ENCODE measurements at regions of chr4 and their contacts with region 1.

Region 1: DNA sequence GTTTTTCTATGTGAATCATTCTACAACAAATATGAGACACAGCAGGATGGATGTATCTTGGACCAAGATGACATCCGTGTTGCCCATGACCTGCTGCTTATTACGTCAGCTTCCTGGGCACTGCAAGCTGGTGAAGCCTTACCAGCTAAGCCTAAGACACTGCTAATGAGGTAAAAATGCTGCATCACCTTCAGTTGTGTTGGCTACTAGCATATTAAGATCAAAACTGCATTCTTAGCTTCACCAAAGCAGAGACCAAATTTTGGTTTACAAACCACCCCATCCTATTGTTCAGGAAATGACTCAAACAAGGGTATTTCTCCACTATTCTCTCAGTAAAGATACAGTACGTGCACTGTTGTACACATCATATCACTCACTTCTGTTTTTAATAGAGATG is 50.3 kb downstream of the MAML3 start:
- DNase-seq: no peak
- ATAC-seq: no peak
- H3K4me3 ChIP-seq: no peak overlapping the region
- H3K27ac ChIP-seq: peak overlapping the region in 1 of 10 donors; percentile 52
- H3K4me1 ChIP-seq: peaks cover 0 to 48% (median 12%) of the 10 kb centered on the region in 9 donors
- H3K27me3 ChIP-seq: no peaks in the 10 kb centered on the region
- CTCF ChIP-seq: no peak

Region 2: DNA sequence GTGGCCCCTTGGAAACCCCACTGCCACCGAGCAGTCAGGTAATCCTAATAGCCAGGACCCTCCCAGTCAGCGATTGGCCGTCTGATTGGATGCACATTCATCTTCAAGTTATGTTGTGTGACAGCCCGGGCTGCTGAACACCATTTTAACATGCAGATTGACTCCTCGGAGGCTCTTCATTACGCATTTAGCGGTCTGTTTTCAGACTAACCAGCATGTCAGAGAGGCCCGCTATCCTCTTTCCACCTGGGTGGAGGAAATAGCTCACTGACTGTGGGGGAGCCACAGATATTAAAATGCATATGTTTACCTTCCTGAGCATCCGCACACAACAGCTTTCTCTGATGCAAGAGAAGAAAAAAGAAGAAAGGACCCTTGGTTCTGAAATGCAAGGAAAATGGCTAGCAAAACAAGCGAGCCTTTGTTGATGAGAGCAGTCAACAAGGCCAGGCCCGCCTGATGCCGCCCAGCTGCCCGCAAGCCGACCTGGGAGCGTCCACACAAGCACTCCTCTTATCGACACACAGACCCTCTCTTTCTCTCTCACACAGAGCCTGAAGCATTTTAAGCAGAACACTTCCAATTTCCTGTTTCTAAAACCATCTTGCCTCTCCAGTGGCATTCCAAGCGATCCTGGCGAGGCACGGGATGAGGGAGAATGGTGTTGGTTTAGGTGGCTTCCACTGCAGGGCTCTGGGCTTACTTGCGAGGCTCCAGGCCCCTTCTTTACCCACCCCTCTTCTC is 319.8 kb before region 1 on chr4:
- intact Hi-C with region 1: no loop called
- DNase-seq: no peak
- ATAC-seq: peak in 2 of 8 donors; percentile 23 to 35
- H3K4me3 ChIP-seq: no peak overlapping the region
- H3K27ac ChIP-seq: no peak overlapping the region
- H3K4me1 ChIP-seq: peaks cover 0 to 8% (median 0%) of the 10 kb centered on the region in 9 donors
- H3K27me3 ChIP-seq: no peaks in the 10 kb centered on the region
- CTCF ChIP-seq: no peak

Region 3: DNA sequence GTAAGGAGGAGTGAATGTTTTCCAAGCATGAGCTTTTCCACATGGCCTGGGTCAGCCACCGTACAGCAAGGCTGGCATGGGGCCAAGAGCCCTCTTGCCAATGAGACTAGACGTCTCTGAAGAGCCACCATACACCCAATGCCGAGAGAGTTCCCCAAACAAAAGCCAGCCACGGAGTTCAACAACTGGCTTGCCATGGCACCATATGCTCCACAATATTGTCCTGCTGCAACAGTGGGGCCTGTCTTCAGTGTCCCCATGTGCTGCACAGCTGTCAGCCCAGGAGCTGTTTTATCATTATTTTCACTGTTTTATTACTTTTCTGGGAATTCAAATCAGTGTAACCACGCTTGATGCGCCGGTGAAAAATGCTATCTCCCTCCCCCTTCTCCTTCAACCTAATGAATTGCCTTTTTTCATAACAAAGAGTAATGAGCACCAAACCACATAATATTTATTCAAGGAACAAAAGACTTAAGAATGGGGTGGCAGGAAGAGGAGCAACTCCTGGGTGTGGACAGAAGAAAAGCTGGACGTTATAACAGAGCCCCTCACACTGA is 31.9 kb after region 1 on chr4:
- intact Hi-C with region 1: loop called in 2 of 10 experiments (anchors 5 kb)
- DNase-seq: peak; percentile 29 to 63
- ATAC-seq: peak in 7 of 8 donors; percentile 48 to 80 (median 59)
- H3K4me3 ChIP-seq: no peak overlapping the region
- H3K27ac ChIP-seq: peak overlapping the region in 5 of 10 donors; percentile 7 to 44 (median 24)
- H3K4me1 ChIP-seq: peaks cover 0 to 26% (median 16%) of the 10 kb centered on the region in 9 donors
- H3K27me3 ChIP-seq: no peaks in the 10 kb centered on the region
- CTCF ChIP-seq: no peak

Region 4: GRCh38 chr4:140252742-140253555 is 149.3 kb after region 1 on chr4:
- intact Hi-C with region 1: no loop called
- DNase-seq: peak; percentile 65 to 80
- ATAC-seq: peak; percentile 88 to 94 (median 92)
- H3K4me3 ChIP-seq: peak overlapping the region; percentile 43 to 95 (median 73)
- H3K27ac ChIP-seq: peak overlapping the region; percentile 72 to 99 (median 94)
- H3K4me1 ChIP-seq: peaks cover 0 to 45% (median 23%) of the 10 kb centered on the region in 9 donors
- H3K27me3 ChIP-seq: no peaks in the 10 kb centered on the region
- CTCF ChIP-seq: peak; percentile 89 to 98 (median 96)